ENCODE measurements at regions of chr10 and their contacts with region 1.

Region 1: DNA sequence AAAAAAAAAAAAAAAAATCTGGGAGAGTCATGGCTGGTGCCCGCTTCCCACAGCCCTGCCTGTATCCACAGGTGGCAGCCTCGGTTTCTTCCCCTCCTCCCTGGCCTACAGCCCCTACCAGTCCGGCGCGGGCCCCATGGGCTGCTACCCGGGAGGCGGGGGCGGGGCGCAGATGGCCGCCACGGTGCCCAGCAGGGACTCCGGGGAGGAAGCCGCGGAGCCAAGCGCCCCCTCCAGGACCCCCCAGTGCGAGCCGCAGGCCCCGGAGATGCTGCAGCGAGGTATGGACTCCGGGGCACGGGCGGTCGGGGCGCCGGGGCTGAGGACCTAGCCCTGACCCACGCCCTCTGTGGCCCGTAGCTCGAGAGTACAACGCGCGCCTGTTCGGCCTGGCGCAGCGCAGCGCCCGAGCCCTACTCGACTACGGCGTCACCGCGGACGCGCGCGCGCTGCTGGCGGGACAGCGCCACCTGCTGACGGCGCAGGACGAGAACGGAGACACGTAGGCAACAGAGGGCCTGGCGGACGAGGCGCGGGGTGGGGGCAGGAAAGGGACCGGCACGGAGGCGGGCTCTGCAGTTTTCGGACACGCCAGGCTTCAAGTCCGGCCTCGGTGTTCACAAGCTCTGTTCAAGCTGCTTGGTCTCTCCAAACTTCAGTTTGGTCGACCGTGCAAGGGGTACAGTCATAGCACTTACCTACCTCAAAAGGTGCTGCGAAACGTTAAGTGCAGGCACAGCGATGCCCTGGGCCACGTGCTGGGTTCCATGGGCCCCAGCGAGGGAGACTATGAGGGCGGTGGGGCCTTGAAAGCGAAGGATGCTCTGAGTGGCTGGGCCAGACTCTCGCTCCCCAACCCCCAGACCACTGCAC is 3.9 kb downstream of the NFKB2 start:
- DNase-seq: peak; percentile 88
- H3K4me3 Mint-ChIP-seq: peak overlapping the region; percentile 62
- H3K27ac Mint-ChIP-seq: peak overlapping the region; percentile 76
- H3K4me1 Mint-ChIP-seq: peaks cover 43% of the 10 kb centered on the region
- H3K27me3 Mint-ChIP-seq: no peaks in the 10 kb centered on the region

Region 2: GRCh38 chr10:102245101-102245931 is 154.1 kb before region 1 on chr10 and contains the start of gene GBF1:
- CTCF ChIA-PET with region 1: interaction called, 13 read pairs
- POLR2A ChIA-PET with region 1: interaction called, 3 read pairs
- DNase-seq: peak; percentile 94
- H3K4me3 Mint-ChIP-seq: peak within 1 kb of the TSS; percentile 97
- H3K27ac Mint-ChIP-seq: peak within 1 kb of the TSS; percentile 93
- H3K4me1 Mint-ChIP-seq: peaks cover 53% of the 10 kb centered on the region
- H3K27me3 Mint-ChIP-seq: peaks cover 15% of the 10 kb centered on the region
- total RNA-seq, gene GBF1: 42.4 to 44.6 TPM

Region 3: DNA sequence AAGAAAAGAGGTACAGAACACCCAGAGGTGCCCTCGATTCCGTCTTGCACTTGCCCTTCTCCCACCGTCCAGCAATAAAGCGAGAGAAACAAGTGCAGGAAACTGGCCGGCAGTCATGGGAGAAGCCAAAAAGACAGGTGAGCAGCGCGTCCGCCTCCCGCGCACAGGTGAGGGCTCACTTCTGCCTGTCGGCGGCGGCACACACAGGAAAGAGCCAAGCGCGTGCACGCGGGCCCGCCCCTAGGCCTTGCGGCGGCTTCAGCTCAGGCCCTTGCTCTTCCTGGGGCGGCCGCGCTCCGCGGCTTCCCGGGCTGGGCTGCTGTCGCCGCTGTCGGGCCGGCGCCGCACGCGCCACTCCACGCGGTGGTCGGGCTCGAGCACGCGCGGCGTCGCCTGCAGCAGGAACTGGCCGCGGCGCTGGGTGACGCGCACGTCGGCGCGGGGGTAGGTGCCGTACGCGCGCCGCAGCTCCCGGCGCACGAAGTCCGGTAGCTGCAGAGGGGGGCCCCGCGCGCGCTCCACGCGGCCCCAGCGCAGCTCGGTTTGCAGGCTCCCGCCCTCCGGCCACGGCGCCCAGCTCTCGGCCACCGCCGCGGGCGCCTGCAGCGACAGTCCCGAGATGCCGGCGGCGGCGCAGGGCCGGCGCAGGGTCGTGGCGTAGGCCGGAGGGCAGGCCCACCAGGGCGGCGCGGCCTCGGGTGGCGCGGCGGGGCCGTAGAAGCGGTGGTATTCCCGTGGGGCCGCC is 50.9 kb after region 1 on chr10:
- CTCF ChIA-PET with region 1: interaction called, 10 read pairs
- POLR2A ChIA-PET with region 1: interaction called, 3 read pairs
- DNase-seq: peak; percentile 89
- H3K4me3 Mint-ChIP-seq: peak overlapping the region; percentile 86
- H3K27ac Mint-ChIP-seq: peak overlapping the region; percentile 94
- H3K4me1 Mint-ChIP-seq: peaks cover 45% of the 10 kb centered on the region
- H3K27me3 Mint-ChIP-seq: no peaks in the 10 kb centered on the region